ENCODE measurements at regions of chr12 and their contacts with region 1.

Region 1: DNA sequence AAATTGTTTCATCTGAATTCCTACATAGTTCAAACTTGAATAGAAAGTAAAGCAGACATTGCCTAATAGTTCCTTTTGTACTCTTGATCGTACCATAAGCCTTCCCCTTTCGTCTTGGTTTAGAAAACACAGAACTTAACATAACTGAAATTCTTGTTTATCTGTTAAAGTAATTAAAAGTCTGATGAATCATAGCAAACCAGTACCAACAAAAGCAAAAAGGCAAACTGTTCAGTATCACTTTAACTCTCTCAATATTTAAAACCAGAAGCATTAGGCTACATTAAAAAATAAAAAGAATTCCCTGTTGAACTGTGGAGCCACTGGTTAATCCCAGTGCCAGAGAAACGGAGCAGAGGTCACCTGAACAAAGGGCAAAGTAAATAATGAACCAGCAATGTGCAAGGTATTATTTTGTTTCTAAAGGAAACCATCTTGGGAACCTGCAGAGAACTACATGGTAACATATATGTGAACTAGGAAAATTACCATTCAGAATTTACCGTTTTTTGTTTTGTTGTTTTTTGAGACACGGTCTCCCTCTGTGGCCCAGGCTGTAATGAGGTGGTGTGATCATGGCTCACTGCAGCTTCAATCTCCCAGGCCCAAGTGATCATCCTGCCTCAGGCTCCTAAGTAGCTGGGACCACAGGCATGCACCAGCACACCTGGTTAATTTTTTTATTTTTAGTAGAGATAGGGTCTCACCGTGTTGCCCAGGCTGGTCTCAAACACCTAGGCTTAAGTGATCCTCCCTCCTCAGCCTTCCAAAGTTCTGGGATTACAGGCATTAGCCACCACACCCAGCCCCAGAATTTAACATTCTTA is 17.1 kb upstream of the HIGD1C start:
- DNase-seq: peak; percentile 37
- H3K4me3 ChIP-seq: no peak overlapping the region
- H3K27me3 ChIP-seq: no peaks in the 10 kb centered on the region
- CTCF ChIP-seq: no peak

Region 2: GRCh38 chr12:50620109-50620977 is 314.9 kb before region 1 on chr12:
- CTCF ChIA-PET with region 1: no interaction called
- POLR2A ChIA-PET with region 1: interaction called, 10 read pairs
- DNase-seq: peak; percentile 73
- H3K4me3 ChIP-seq: no peak overlapping the region
- H3K27me3 ChIP-seq: no peaks in the 10 kb centered on the region
- CTCF ChIP-seq: peak; percentile 28; the same call in 1 of the 2 replicates